Pancreas (tissue), 10 donors: ENCODE measurements at regions of chr17 and their contacts with region 1.

Region 1: DNA sequence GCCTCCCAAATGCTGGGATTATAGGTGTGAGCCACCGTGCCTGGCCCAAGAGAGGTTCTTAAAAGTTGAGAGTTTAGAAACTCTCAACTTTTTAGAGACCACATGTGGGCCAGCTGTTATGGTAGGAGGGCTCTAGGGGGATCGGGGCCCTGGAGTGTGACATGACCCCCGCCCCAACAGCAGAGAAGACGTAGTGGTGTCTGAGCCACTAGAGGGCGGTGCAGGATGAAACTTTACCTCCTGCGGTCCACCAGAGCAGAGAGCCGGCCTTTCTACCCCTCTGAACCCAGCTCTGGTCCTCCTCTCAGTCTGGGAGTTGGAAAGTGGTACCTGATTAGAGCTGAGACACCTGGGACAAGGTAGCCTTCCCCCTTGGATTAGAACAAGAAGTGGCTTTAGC is 7.4 kb downstream of the CDK5RAP3 start:
- DNase-seq: peak in 1 of 6 donors; percentile 55
- ATAC-seq: peak; percentile 50 to 77 (median 74)
- H3K4me3 ChIP-seq: no peak overlapping the region
- H3K27ac ChIP-seq: no peak overlapping the region
- H3K4me1 ChIP-seq: no peaks in the 10 kb centered on the region
- H3K27me3 ChIP-seq: no peaks in the 10 kb centered on the region
- CTCF ChIP-seq: peak; percentile 19 to 53 (median 36)

Region 2: GRCh38 chr17:47840740-47841603 is 137.4 kb before region 1 on chr17 and contains the start of gene SCRN2:
- intact Hi-C with region 1: no loop called
- DNase-seq: peak; percentile 84 to 98 (median 94)
- ATAC-seq: peak; percentile 89 to 95 (median 94)
- H3K4me3 ChIP-seq: peak within 1 kb of the TSS; percentile 85 to 95 (median 94)
- H3K27ac ChIP-seq: peak within 1 kb of the TSS; percentile 5 to 64 (median 58)
- H3K4me1 ChIP-seq: peaks cover 8 to 26% (median 16%) of the 10 kb centered on the region in 3 donors
- H3K27me3 ChIP-seq: no peaks in the 10 kb centered on the region
- CTCF ChIP-seq: peak; percentile 83 to 98 (median 94)
- total RNA-seq, gene SCRN2: 12.6 to 24.3 (median 19.0) TPM

Region 3: DNA sequence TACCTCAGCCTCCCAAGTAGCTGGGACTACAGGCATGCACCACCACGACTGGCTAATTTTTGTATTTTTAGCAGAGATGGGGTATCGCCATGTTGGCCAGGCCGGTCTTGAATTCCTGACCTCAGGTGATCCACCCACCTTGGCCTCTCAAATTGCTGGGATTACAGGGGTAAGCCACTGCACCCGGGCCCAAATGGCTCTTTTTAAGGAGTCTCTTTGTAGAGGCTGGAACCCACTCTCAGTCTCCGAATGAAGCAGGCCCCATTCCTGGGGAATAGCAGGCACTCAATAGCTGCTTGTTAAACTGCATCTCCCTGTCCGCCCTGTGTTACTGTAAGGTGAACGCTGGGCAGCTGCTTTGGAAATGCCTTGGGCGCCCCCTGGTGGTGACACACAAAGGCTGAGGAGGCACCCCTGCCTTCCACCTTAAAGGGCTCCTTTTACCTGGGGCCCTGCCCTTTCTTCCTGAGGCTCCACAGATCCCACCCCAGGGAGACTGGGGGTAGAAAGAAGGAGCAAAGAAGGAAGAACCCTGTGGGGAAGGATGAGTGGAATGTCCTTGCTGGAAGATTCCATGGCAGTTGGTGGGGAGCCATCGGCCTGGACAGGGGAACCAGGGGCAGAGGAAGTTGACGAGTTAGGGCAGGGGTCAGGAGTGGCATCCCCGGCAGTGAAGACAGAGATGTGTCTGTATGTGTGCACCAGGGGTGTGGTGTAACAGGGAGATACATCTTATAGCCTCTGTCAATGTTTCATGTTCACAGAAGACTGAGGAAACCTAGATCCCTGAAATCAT is 88.4 kb before region 1 on chr17:
- intact Hi-C with region 1: no loop called
- DNase-seq: peak; percentile 75 to 98 (median 90)
- ATAC-seq: peak; percentile 95 to 98 (median 96)
- H3K4me3 ChIP-seq: no peak overlapping the region
- H3K27ac ChIP-seq: no peak overlapping the region
- H3K4me1 ChIP-seq: peaks cover 0 to 7% (median 0%) of the 10 kb centered on the region in 3 donors
- H3K27me3 ChIP-seq: no peaks in the 10 kb centered on the region
- CTCF ChIP-seq: peak; percentile 94 to 97 (median 96)

Region 4: DNA sequence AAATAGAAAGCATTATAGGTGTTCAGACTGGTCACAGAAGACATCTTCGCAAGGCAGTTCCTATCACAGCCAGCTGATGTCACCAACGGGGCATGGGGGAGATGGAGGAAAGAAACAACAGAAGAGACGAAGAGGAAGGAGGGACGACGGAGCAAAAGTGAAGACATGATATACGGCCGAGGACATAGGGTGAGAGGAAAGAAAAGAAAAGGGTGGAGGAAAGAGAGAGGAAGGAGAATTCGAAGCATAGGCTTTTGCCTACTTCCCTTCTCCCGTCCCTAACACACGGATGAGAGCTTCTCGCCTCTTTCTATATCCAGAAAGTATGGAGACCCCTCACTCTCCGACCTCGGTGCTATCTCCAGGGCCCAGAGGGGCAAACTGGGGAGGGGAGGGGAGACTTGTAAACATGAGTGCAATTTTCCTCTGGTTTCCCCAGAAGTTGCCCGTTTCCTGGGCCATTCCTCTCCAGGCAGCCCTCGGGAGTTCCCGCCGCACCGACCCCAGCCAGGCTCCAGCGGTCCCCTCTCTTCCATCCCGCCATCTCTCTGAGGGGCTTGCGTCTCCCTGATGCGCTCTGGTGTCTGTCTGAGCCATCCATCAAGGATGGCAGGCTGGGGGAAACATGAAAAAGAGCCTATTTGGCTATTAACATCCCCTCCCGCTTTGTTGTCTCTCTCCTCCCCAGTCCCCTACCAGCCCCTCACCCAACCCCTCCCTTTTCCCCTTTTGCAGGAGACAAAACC is 33.3 kb after region 1 on chr17:
- intact Hi-C with region 1: loop called in 2 of 3 experiments (anchors 5 kb)
- DNase-seq: no peak
- ATAC-seq: peak in 3 of 4 donors; percentile 65 to 73 (median 70)
- H3K4me3 ChIP-seq: peak overlapping the region in 1 of 4 donors; percentile 38
- H3K27ac ChIP-seq: no peak overlapping the region
- H3K4me1 ChIP-seq: peaks cover 0 to 5% (median 0%) of the 10 kb centered on the region in 3 donors
- H3K27me3 ChIP-seq: no peaks in the 10 kb centered on the region
- CTCF ChIP-seq: no peak

Region 5: DNA sequence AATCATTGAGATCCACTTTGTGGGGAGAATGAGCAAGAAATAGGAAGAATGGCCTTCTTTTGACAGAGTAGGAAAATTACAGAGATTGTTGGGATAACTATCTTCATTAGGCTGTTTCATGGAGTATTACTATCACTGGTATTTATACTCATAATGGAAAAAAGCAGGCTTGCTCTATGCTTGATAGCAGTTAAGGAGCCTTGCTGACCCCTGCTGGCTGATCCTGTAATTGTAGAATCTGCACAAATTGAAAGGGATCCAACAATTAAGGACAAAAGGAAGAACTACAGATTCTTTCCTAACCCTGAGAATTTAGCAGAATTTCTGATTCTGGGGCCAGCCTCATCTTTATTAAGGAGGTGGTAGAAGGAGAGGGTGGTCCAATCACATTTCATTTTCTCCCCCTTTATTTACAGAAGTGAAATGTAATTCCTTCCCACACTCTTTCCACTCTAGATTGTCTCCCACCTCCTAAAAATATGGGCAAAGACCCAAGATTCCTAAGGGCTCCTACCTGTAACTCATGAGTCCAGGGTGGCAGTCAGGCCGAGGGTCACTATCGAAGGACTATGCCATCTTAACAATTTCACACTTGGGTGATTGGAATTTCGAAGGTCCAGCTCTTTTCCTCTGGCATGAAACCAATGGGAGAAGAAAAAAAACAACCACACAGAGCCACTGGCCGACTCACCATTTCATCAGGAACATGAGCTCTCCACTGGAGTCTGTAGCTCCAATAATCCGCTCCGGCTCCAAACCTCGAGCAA is 96.2 kb after region 1 on chr17:
- intact Hi-C with region 1: no loop called
- DNase-seq: peak in 5 of 6 donors; percentile 65 to 80 (median 70)
- ATAC-seq: peak; percentile 81 to 98 (median 94)
- H3K4me3 ChIP-seq: no peak overlapping the region
- H3K27ac ChIP-seq: no peak overlapping the region
- H3K4me1 ChIP-seq: peaks cover 0 to 5% (median 0%) of the 10 kb centered on the region in 3 donors
- H3K27me3 ChIP-seq: no peaks in the 10 kb centered on the region
- CTCF ChIP-seq: peak; percentile 49 to 72 (median 60)

Region 6: GRCh38 chr17:48148854-48149786 is 170.8 kb after region 1 on chr17:
- intact Hi-C with region 1: no loop called
- DNase-seq: no peak
- ATAC-seq: no peak
- H3K4me3 ChIP-seq: no peak overlapping the region
- H3K27ac ChIP-seq: no peak overlapping the region
- H3K4me1 ChIP-seq: peaks cover 0 to 8% (median 4%) of the 10 kb centered on the region in 3 donors
- H3K27me3 ChIP-seq: no peaks in the 10 kb centered on the region
- CTCF ChIP-seq: no peak